ENCODE measurements at regions of chr6 and their contacts with region 1.

Region 1: DNA sequence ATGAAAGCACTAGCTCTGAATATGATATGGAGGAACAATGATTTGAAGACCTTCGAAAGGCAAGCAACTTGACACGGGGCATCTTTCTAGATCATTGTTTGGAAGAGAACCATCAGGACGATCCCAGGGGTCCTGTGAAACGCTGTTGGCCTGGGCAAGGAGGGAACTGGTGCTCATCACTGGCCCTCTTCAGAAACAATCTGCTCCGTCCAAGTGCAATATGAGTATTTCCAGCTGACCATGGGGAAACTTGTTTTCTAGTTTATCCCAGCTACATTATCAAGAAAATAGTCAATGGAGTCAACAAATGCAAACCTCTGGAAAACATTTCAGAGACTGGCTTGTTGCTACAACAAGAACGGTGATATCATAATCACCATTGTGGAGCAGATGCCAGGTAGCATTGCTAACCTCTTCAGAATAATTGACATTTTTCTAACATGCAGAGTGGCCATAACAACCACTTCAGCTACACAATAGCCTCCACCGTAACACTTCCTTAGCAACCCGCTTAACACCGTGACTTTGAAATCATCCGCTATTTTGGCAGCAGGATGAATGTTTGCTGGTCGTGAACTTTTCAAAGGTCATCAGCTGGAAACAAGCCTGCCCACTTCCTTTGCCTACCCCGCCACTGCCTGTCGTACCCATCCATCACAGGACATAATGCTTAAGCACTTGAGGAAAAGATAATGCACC is 112.0 kb upstream of the PDE10A start:
- DNase-seq: peak in 1 of 2 donors; percentile 86
- ATAC-seq: peak; percentile 86 to 99 (median 97)
- H3K4me3 ChIP-seq: peak overlapping the region in 1 of 10 donors; percentile 8
- H3K27ac ChIP-seq: peak overlapping the region in 9 of 10 donors; percentile 50 to 80 (median 72)
- H3K4me1 ChIP-seq: peaks cover 0 to 40% (median 6%) of the 10 kb centered on the region in 9 donors
- H3K27me3 ChIP-seq: no peaks in the 10 kb centered on the region
- CTCF ChIP-seq: no peak

Region 2: DNA sequence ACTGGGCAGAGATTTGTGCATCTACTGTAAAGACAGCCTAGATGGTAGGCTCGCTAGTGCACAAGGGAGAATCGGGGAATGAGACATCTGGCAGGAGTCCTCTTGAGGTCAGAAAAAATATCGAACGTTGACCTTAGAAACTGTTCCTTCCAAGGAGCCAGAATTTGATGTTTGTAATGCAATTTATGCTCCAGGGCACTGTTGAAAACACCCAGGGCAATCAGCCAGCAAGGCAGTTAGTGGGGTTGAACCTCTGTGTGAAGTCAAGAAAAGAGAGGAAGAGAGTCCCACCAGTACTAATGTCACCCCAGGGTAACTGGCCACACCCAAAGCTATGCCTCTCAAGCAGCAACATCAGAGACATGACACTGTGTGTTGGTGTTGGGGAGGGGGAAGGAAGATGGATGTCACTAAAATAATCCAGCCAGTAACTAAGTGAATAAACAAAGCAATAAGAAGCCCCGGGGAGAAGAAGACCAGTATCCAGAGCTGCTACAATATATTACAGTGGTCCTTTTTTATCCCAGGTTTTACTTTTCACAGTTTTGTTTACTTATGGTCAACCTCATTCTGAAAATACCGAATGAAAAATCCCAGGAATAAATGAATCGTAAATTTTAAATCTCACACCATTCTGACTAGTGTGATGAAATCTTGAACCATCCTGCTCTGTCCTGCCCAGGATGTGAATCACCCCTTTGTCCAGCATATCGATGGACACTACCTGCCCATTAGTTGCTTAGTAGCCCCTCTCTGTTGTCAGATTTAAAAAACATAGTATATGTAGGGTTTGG is 79.1 kb before region 1 on chr6:
- intact Hi-C with region 1: loop called in 2 of 10 experiments (anchors 1 to 2 kb)
- DNase-seq: no peak
- ATAC-seq: no peak
- H3K4me3 ChIP-seq: no peak overlapping the region
- H3K27ac ChIP-seq: peak overlapping the region in 3 of 10 donors; percentile 3 to 70 (median 11)
- H3K4me1 ChIP-seq: peaks cover 0 to 31% (median 6%) of the 10 kb centered on the region in 9 donors
- H3K27me3 ChIP-seq: no peaks in the 10 kb centered on the region
- CTCF ChIP-seq: no peak

Region 3: DNA sequence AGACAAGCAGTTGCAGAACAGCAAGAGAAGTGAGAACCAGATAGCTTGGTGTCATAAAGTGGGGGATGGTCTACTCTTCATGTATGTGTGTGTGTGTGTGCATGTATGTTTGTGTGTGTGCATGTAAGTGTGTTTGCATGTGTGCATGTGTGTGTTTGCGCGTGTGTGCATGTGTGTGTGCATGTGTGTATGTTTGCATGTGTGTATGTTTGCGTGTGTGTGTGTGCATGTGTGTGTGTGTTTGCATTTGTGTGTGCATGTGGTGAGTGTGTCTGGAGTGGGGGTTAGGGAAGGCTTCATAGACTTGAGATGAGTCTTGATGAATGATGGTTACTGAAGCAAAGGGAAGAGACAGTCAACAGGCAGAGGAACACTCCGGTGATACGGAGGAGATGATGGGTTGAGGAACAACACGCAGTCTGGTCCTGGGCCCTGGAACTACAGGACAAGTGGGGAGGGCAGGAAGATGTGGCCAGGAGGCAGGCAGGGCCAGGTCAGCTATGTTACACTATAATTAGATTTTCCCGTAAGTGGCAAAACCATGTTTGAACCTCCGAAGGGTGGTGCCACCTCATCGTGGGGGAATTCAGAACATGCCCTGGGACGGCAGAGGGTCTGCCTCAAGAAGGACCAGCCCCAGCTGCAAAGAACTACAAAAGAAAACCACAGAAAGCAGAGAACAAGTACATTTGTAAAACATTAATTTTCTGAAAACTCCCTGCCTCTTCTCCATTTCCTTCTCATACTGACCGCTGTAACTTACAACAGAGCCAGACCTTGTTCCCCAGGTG is 73.3 kb before region 1 on chr6:
- intact Hi-C with region 1: loop called in 2 of 10 experiments (anchors 1 to 2 kb)
- DNase-seq: no peak
- ATAC-seq: peak; percentile 20 to 72 (median 38)
- H3K4me3 ChIP-seq: no peak overlapping the region
- H3K27ac ChIP-seq: peak overlapping the region in 7 of 10 donors; percentile 34 to 81 (median 77)
- H3K4me1 ChIP-seq: peaks cover 0 to 53% (median 9%) of the 10 kb centered on the region in 9 donors
- H3K27me3 ChIP-seq: no peaks in the 10 kb centered on the region
- CTCF ChIP-seq: no peak

Region 4: DNA sequence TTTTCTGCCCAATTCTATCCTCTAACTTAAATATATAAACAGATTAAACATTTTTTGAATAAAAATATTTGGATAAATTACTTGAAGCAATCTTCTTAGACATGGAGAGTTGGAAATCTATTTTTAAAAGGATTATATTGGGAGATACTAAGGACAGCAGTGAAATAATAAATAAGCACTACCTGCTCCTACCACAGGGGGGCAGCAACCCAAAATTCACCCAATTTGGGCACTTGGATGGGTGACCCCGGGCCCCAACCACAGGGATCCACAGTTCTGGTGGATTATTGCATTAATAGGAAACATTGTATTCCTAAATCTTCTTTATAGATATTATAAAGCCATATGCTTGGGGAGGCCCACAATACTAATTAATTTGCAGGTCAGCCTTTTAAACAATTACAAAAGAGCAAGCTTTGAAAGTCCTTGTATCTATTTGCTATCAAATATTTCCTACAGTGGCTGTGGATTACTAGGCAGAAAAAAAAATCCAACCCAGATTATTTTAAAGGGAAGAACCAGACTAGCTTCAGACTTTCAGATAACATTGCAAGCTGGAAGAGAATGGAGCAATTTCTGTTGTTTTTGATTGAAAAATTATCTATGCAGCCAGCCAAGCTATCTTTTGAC is 45.6 kb before region 1 on chr6:
- intact Hi-C with region 1: loop called in 1 of 10 experiments (anchors 5 kb)
- DNase-seq: peak in 1 of 2 donors; percentile 55
- ATAC-seq: peak in 4 of 8 donors; percentile 46 to 65 (median 49)
- H3K4me3 ChIP-seq: no peak overlapping the region
- H3K27ac ChIP-seq: no peak overlapping the region
- H3K4me1 ChIP-seq: peaks cover 0 to 8% (median 0%) of the 10 kb centered on the region in 9 donors
- H3K27me3 ChIP-seq: no peaks in the 10 kb centered on the region
- CTCF ChIP-seq: peak; percentile 81 to 89 (median 87)

Measured in heart right ventricle (tissue), 16 donors.